Colonic mucosa (tissue), 4 donors: ENCODE measurements at regions of chr6 and their contacts with region 1.

Region 1: DNA sequence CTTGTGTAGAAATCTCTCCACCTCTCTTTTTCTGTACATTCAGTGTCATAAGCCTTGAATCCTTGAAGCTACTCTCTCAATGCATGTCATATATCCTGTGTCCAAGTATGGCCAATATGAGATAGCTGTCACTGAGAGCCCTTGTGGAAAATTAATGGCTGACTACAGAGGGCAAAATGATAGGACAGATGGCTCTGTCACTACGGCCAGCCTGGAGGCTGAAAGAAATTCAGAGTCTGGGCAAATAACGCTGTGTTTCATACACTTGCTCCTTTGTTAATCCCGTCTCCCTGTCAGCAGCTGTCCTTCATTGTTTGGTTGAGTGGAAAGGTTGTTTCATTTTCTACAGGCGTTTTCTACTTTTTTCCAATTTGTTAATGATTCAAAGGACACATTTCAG is 70.4 kb upstream of the VGLL2 start:
- DNase-seq: no peak
- H3K4me3 ChIP-seq: no peak overlapping the region
- H3K27ac ChIP-seq: no peak overlapping the region
- H3K4me1 ChIP-seq: no peaks in the 10 kb centered on the region
- H3K27me3 ChIP-seq: no peaks in the 10 kb centered on the region
- CTCF ChIP-seq: no peak

Region 2: GRCh38 chr6:116847227-116847626 is 347.8 kb before region 1 on chr6:
- intact Hi-C with region 1: no loop called
- DNase-seq: no peak
- H3K4me3 ChIP-seq: no peak overlapping the region
- H3K27ac ChIP-seq: no peak overlapping the region
- H3K4me1 ChIP-seq: no peaks in the 10 kb centered on the region
- H3K27me3 ChIP-seq: no peaks in the 10 kb centered on the region
- CTCF ChIP-seq: no peak

Region 3: DNA sequence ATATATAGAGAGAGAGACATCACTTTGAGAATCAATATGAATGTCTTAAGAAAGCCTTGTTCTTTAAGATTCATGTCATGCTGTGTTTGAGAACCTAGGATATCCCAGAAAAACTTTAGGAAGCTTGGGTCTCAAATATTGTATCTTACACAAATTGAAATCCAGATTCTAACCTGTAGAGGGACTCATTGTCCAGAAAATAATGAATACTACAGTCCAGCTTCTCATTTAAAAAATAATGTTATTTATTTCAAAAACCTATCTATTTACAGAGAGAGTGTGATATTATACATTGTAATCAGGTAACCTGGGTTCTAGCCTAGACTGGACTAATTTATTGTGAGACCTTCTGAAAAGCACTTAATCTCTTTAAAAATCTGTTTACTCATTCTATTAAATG is 313.7 kb before region 1 on chr6:
- intact Hi-C with region 1: loop called (anchors 10 kb)
- DNase-seq: no peak
- H3K4me3 ChIP-seq: no peak overlapping the region
- H3K27ac ChIP-seq: no peak overlapping the region
- H3K4me1 ChIP-seq: no peaks in the 10 kb centered on the region
- H3K27me3 ChIP-seq: peaks cover 15% of the 10 kb centered on the region
- CTCF ChIP-seq: peak; percentile 12